B cell (primary cell): ENCODE measurements at regions of chr11 and their contacts with region 1.

Region 1: GRCh38 chr11:62556108-62556871 is 9.7 kb upstream of the AHNAK start:
- DNase-seq: peak; percentile 75
- ATAC-seq: peak; percentile 37
- H3K4me3 ChIP-seq: peak overlapping the region in 4 of 5 experiments; percentile 0 to 53 (median 26)
- H3K4me3 Mint-ChIP-seq: peak overlapping the region; percentile 80
- H3K27ac ChIP-seq: peak overlapping the region; percentile 98 to 99
- H3K27ac Mint-ChIP-seq: peak overlapping the region; percentile 96
- H3K4me1 ChIP-seq: peaks cover 65 to 84% of the 10 kb centered on the region in 2 donors
- H3K4me1 Mint-ChIP-seq: peaks cover 74% of the 10 kb centered on the region
- H3K27me3 ChIP-seq: no peaks in the 10 kb centered on the region
- H3K27me3 Mint-ChIP-seq: no peaks in the 10 kb centered on the region
- CTCF ChIP-seq: no peak

Region 2: DNA sequence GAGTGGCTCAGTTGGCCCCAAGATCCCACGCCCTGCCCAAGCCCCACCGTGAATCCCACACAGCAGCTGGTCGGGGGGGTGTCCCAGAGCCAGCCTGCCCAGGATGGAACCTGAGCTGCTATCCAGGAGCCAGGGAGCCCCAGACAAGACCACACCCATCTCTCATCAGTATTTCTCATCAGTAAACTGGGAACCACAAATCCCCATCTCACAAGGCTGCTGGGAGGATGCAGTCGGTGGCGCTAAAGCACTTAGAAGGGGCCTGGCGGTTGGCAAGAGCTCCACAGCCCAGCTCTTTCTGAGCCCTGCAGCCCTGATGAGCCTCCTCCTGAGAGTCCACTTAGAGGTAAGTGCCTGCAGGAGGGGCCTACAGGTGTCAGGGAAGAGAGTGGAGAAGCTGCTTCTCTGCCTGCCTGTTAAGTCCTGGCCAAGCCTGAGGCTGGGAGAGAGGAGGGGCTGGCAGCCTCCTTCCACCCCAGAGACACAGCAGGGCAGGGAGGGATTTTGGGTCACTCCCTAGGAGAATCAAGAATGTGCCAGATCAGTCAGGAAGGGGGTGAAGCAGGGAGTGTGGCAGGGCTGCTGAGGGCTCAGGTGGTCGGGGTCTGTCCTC is 671.0 kb before region 1 on chr11:
- CTCF ChIA-PET with region 1: no interaction called
- POLR2A ChIA-PET with region 1: no interaction called
- intact Hi-C with region 1: loop called (anchors 2 kb)
- DNase-seq: no peak
- ATAC-seq: no peak
- H3K4me3 ChIP-seq: no peak overlapping the region
- H3K4me3 Mint-ChIP-seq: no peak overlapping the region
- H3K27ac ChIP-seq: no peak overlapping the region
- H3K27ac Mint-ChIP-seq: no peak overlapping the region
- H3K4me1 ChIP-seq: peaks cover 21 to 48% of the 10 kb centered on the region in 2 donors
- H3K4me1 Mint-ChIP-seq: peaks cover 49% of the 10 kb centered on the region
- H3K27me3 ChIP-seq: no peaks in the 10 kb centered on the region
- H3K27me3 Mint-ChIP-seq: no peaks in the 10 kb centered on the region
- CTCF ChIP-seq: no peak

Region 3: DNA sequence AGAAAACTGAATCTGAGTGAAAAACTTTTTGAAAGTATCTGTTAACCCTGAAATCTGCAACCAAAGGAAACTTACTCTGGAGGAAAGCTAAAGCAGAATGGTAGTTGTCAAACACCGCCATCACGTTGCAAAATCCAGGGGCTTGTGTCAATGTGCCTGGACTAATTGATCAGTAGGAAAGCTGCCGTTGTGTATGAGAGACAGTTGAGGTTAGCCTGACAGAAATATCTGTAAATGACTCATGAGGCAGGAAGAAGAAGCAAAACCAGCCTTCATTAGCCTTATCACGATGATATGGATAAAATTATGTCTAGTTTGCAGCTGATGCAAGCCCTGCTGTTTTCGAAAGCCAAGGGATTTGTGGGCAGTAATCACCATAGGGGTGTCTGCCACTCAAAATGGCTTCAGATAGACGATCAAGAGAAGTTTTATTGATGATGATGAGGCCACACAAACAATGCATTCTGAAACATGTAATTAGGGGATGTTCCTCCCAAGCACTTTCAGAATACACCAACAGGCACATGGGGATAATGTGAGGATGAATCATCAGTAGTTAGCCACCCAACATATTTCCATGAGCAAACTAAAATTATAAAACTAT is 128.6 kb before region 1 on chr11:
- CTCF ChIA-PET with region 1: interaction called, 339 read pairs
- POLR2A ChIA-PET with region 1: interaction called, 6 read pairs
- intact Hi-C with region 1: loop called (anchors 1 kb)
- DNase-seq: no peak
- ATAC-seq: no peak
- H3K4me3 ChIP-seq: no peak overlapping the region
- H3K4me3 Mint-ChIP-seq: no peak overlapping the region
- H3K27ac ChIP-seq: no peak overlapping the region
- H3K27ac Mint-ChIP-seq: peak overlapping the region; percentile 12
- H3K4me1 ChIP-seq: peaks cover 4 to 13% of the 10 kb centered on the region in 2 donors
- H3K4me1 Mint-ChIP-seq: peaks cover 16% of the 10 kb centered on the region
- H3K27me3 ChIP-seq: peaks cover 0 to 2% (median 0%) of the 10 kb centered on the region in 4 experiments
- H3K27me3 Mint-ChIP-seq: peaks cover 10% of the 10 kb centered on the region
- CTCF ChIP-seq: no peak

Region 4: GRCh38 chr11:62461740-62462507 is 94.4 kb before region 1 on chr11:
- CTCF ChIA-PET with region 1: interaction called, 5 read pairs
- POLR2A ChIA-PET with region 1: no interaction called
- intact Hi-C with region 1: loop called (anchors 1 kb)
- DNase-seq: no peak
- ATAC-seq: no peak
- H3K4me3 ChIP-seq: no peak overlapping the region
- H3K4me3 Mint-ChIP-seq: no peak overlapping the region
- H3K27ac ChIP-seq: no peak overlapping the region
- H3K27ac Mint-ChIP-seq: no peak overlapping the region
- H3K4me1 ChIP-seq: peaks cover 0 to 8% of the 10 kb centered on the region in 2 donors
- H3K4me1 Mint-ChIP-seq: peaks cover 17% of the 10 kb centered on the region
- H3K27me3 ChIP-seq: no peaks in the 10 kb centered on the region
- H3K27me3 Mint-ChIP-seq: no peaks in the 10 kb centered on the region
- CTCF ChIP-seq: no peak

Region 5: DNA sequence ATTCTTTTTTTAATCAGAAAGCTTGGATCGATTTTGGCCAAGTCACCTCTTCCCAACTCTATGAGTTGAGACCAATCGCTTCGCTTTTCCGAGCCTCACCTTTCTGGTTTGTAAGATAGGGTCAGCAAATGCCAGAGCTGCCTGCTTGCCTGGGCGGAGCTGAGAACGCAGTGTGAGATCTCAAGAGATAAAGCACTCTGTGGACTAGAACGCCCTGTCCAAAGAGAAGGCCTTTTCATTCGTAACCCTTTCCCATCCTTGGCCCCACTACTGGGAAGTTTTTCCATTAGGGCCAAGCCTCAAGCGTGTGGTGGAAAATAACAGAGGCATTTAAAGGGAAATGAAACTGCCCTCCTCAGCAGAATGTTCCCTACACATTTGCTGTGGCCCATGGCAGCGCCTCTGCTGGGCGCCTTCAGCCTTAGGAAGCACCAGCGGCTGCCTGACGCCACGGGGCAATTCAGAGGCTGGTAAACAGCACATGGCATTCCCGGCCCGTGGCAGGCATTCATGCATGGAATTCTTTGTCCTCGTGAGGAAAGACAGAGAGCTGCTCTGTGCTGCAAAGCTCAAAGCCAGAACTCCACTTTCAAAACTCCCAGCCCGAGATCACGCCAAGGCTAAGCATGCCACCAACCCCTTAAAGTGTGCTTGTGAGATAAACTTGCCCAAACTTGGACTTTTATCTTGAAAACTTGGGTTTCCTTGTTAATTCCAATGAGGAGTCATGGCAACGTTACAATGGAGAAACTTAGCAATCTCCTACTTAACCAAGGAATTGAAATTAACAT is 47.8 kb before region 1 on chr11:
- CTCF ChIA-PET with region 1: interaction called, 11 read pairs
- POLR2A ChIA-PET with region 1: no interaction called
- intact Hi-C with region 1: loop called (anchors 1 kb)
- DNase-seq: peak; percentile 70
- ATAC-seq: peak; percentile 66
- H3K4me3 ChIP-seq: no peak overlapping the region
- H3K4me3 Mint-ChIP-seq: no peak overlapping the region
- H3K27ac ChIP-seq: no peak overlapping the region
- H3K27ac Mint-ChIP-seq: peak overlapping the region; percentile 26
- H3K4me1 ChIP-seq: peaks cover 4 to 11% of the 10 kb centered on the region in 2 donors
- H3K4me1 Mint-ChIP-seq: peaks cover 12% of the 10 kb centered on the region
- H3K27me3 ChIP-seq: peaks cover 0 to 4% (median 0%) of the 10 kb centered on the region in 4 experiments
- H3K27me3 Mint-ChIP-seq: peaks cover 5% of the 10 kb centered on the region
- CTCF ChIP-seq: peak; percentile 29

Region 6: DNA sequence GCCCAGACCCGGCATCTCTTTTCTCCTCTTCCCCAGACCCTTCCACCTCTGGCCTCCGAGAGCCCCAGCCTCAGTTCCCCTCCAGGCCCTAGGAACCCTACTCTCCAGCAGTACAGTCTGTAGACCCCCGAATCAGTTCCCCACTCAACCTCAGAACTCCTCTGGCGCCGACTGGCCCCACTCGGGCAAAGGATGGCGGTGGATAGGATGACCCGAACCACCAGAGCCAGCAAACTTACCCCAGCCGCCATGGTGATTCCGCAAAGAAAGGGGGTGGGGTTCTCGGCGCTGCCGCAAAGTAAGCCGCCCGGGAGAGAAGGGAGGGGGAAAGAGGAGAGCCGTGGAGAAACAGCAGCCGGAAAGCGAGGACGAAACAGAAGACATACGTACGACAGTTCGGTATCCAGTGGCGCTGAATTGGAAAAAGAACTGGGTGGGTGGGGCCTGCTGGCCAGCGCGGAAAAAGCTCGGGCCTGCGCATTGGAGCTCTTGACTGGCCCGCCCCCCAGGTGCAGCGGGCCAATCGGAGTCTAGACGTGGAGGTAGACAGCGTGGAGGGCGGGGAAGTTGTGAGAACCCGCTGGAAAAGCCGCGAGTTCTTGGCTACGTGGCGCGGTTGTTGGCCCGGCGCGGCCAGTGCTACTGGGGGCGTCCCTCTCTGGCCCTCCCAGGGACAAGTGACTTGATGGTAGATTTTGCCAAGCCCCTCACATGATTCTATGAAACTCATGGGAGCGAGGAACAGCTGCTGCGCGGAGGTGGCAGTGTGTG is 17.5 kb after region 1 on chr11 and contains the start of gene EEF1G:
- CTCF ChIA-PET with region 1: interaction called, 33 read pairs
- POLR2A ChIA-PET with region 1: interaction called, 7 read pairs
- intact Hi-C with region 1: loop called (anchors 1 kb)
- DNase-seq: peak; percentile 99
- ATAC-seq: peak; percentile 93
- H3K4me3 ChIP-seq: peak within 1 kb of the TSS; percentile 74 to 99 (median 80)
- H3K4me3 Mint-ChIP-seq: peak within 1 kb of the TSS; percentile 92
- H3K27ac ChIP-seq: peak within 1 kb of the TSS; percentile 84 to 88
- H3K27ac Mint-ChIP-seq: peak within 1 kb of the TSS; percentile 95
- H3K4me1 ChIP-seq: peaks cover 12 to 25% of the 10 kb centered on the region in 2 donors
- H3K4me1 Mint-ChIP-seq: peaks cover 50% of the 10 kb centered on the region
- H3K27me3 ChIP-seq: no peaks in the 10 kb centered on the region
- H3K27me3 Mint-ChIP-seq: no peaks in the 10 kb centered on the region
- CTCF ChIP-seq: no peak
- total RNA-seq, gene EEF1G: 1,778 and 1,867 TPM in 2 replicates